Caco-2 (cell line): ENCODE measurements at regions of chr2 and their contacts with region 1.

Region 1: GRCh38 chr2:199940373-199940772 is 14.9 kb downstream of the TYW5 start:
- DNase-seq: no peak
- H3K4me3 ChIP-seq: no peak overlapping the region
- H3K4me3 Mint-ChIP-seq: no peak overlapping the region
- H3K27ac Mint-ChIP-seq: no peak overlapping the region
- H3K4me1 ChIP-seq: 0 out of 2 replicates have a peak, but pooled peaks cover 10% of the 10 kb centered on the region
- H3K4me1 Mint-ChIP-seq: no peaks in the 10 kb centered on the region
- H3K27me3 ChIP-seq: no peaks in the 10 kb centered on the region
- H3K27me3 Mint-ChIP-seq: no peaks in the 10 kb centered on the region
- CTCF ChIP-seq: peak; percentile 22 to 46

Region 2: DNA sequence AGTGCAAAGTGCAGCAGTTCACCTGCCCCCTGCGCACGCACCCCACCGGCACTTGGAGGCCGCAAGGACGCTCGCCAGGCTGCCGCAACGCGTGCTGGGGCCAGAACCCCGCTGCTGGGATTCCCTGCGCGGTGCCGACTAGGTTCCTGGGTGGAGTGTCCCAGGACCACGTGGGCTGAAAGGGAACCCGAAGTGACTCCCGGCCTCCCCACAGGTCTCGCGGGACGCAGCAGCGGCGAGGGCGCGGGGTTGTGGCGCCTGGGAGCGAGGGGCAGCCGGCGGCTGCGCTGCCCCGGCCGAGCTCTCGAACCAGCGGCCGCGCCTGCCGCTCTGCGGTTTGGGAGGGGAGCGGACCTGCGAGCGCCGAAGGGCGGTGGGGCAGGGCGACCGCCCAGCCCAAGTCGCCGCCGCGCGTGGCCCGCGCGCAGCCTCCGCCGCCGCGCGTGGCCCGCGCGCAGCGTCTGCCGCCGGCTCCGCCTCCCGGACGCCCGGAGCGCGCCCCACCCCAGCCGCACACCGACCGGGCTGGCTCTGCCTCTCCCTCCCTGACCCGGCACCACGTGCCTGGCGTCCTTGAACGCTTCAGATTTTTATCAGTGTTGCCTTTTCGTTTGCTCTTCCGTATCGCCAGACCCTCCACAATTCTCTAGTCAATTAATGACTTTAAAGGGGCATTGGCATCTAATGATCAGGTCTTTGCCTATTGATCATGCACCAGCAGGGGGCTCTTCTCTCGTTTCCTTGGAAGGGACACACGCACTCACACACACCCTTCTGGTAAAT is 89.5 kb before region 1 on chr2 and contains the start of gene FTCDNL1:
- CTCF ChIA-PET with region 1: interaction called, 4 read pairs
- POLR2A ChIA-PET with region 1: no interaction called
- intact Hi-C with region 1: loop called (anchors 2 kb)
- DNase-seq: peak; percentile 67 to 68
- H3K4me3 ChIP-seq: peak within 1 kb of the TSS; percentile 74
- H3K4me3 Mint-ChIP-seq: peak within 1 kb of the TSS; percentile 83
- H3K27ac Mint-ChIP-seq: peak within 1 kb of the TSS; percentile 56
- H3K4me1 ChIP-seq: no peaks in the 10 kb centered on the region
- H3K4me1 Mint-ChIP-seq: peaks cover 6% of the 10 kb centered on the region
- H3K27me3 ChIP-seq: no peaks in the 10 kb centered on the region
- H3K27me3 Mint-ChIP-seq: peaks cover 15% of the 10 kb centered on the region
- CTCF ChIP-seq: peak; percentile 74 to 78
- total RNA-seq, gene FTCDNL1: 0.35 and 0.68 TPM in 2 replicates

Region 3: DNA sequence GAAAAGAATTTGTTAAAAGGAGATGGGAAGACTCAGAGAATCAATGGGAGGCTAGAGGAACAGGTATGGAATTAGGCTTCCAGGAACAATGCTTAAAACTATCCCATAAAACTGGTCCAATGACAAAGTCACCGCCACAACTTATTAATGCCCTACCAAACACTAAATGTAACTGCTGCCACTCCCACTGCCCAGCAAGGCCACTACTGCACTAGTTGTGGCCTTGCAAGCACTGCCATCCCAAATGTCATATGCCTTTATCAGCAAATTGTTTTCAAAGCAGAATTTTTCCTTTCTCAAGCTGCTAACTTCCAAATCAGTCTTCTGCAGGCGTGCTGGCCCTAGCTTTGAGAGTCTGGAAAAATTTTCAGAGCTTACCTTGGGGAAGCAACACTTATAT is 43.8 kb before region 1 on chr2:
- CTCF ChIA-PET with region 1: interaction called, 3 read pairs
- POLR2A ChIA-PET with region 1: no interaction called
- intact Hi-C with region 1: loop called (anchors 1 kb)
- DNase-seq: no peak
- H3K4me3 ChIP-seq: no peak overlapping the region
- H3K4me3 Mint-ChIP-seq: no peak overlapping the region
- H3K27ac Mint-ChIP-seq: no peak overlapping the region
- H3K4me1 ChIP-seq: no peaks in the 10 kb centered on the region
- H3K4me1 Mint-ChIP-seq: no peaks in the 10 kb centered on the region
- H3K27me3 ChIP-seq: no peaks in the 10 kb centered on the region
- H3K27me3 Mint-ChIP-seq: no peaks in the 10 kb centered on the region
- CTCF ChIP-seq: no peak

Region 4: GRCh38 chr2:200089040-200089757 is 148.8 kb after region 1 on chr2:
- CTCF ChIA-PET with region 1: no interaction called
- POLR2A ChIA-PET with region 1: no interaction called
- intact Hi-C with region 1: no loop called
- DNase-seq: no peak
- H3K4me3 ChIP-seq: no peak overlapping the region
- H3K4me3 Mint-ChIP-seq: no peak overlapping the region
- H3K27ac Mint-ChIP-seq: no peak overlapping the region
- H3K4me1 ChIP-seq: peaks cover 59% of the 10 kb centered on the region
- H3K4me1 Mint-ChIP-seq: peaks cover 30% of the 10 kb centered on the region
- H3K27me3 ChIP-seq: no peaks in the 10 kb centered on the region
- H3K27me3 Mint-ChIP-seq: no peaks in the 10 kb centered on the region
- CTCF ChIP-seq: no peak